GM10248 (cell line): ENCODE measurements at regions of chr2 and their contacts with region 1.

Region 1: DNA sequence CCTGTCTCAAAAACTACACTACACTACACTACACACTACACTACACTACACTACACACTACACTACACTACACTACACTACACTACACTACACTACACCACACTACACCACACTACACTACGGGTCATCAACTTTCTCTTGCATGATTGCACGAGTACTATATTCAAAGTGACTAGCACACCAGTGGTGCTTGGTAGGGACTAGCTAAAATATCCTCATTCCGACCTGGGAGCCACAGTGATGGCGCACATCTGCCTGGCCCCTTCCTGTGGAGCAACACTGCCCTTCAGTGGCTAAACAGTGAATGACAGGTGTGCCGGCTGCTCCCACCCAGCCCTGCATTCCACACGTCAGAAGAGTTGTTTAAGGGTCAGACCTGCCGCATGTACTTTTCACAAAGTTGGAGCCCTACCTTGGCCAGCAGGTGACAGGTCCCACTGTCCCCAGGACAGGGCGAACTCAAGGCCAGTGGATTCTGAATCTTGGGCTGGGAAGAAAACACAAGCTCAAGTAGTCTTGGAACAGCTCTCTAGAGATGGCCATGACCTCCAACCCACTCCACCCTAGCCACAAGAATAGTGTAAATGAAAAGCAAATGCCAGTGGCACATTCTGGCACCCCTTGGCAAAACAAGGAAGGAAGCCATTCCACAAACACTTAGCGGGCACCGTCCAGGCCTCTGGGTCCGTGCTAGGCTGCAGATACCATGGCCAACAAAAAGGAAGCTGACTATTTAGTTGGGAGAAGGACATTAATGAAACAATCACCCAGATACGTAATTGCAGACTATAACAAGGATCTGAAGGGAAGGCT is 79.7 kb upstream of the MSH2 start:
- DNase-seq: peak; percentile 82
- CTCF ChIP-seq: peak; percentile 99

Region 2: GRCh38 chr2:46923041-46923528 is 400.1 kb before region 1 on chr2:
- CTCF ChIA-PET with region 1: interaction called, 20 read pairs
- POLR2A ChIA-PET with region 1: no interaction called
- DNase-seq: no peak
- CTCF ChIP-seq: no peak

Region 3: DNA sequence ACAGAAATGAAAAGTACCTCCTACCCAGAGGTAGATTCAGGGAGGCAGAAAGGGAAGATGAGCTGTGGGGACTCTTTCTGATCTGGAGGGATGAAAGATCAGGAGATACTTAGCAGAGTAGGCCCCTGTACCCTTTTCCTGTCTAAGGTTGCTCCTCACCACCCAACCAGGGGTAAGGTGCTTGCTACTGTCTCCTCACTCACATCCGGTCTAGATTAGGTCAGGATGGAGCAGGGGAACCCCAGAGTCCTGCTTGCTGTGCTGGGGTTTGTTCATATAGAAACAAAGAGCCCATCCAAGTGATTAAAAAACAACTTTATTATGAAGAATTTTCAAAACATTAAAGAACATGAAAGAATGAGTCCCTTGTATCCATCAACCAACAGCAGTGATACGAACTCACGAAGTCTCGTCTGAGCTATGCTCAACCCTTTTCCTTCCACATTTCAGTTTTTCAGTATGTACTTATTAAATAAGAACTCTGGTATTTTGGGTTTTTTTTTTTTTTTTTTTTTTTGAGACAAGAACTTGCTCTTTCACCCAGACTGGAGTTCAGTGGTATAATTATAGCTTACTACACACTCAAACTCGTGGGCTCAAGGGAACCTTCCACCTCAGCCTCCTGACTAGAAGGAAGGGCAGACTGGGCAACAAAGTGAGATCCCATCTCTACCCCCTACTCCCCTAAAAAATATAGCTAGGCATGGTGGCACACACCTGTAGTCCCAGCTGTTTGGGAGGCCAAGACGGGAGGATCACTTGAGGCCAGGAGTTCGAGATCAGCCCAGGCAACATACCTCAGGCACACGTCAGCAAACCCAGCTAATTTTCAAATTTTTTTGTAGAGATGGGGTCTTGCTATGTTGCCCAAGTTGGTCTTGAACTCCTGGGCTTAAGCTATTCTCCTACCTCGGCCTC is 379.1 kb before region 1 on chr2:
- CTCF ChIA-PET with region 1: interaction called, 10 read pairs
- POLR2A ChIA-PET with region 1: no interaction called
- DNase-seq: peak; percentile 69
- CTCF ChIP-seq: no peak

Region 4: DNA sequence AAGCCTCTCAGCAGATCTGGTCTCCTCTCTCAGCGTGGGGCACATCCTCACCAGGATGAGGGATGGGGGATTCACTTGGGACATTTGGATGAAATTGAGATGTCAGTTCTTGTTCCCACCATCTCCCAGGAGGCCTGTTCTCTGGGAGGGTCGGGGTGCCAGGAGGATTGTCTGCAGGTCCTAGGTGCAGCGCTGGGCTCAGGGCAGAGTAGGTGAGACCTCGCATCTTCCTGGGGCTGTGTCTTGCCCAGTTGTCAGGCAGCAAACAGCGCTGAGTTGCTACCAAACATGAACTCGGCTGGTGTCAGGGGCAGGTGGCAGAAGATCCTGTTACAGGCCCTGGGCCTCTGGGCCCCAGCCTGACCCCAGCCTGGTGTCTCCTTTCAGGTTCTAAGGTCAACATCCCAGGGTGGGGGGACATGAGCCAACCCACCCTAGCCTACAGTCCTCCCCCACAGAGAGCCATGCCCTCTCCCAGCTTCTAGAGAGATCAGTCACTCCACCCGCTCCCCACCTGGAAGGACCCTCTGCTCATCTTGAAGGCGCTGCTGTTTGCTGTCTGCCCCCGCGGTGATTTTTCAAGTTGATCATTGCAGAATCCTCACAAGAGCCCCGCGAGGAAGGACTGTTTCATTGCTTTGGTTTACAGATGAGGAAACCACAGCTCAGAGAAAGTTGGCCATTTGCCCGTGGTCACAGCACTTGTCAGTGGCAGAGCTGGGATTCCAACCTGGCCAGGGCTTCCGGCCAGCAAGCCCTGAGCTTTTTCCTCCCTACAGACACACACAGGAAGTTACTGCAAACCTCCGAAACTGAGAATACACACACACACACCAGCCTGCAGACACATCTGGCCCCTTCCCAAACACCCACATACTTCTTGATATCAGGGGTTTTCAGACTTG is 252.0 kb before region 1 on chr2:
- CTCF ChIA-PET with region 1: interaction called, 12 read pairs
- POLR2A ChIA-PET with region 1: no interaction called
- DNase-seq: peak; percentile 71
- CTCF ChIP-seq: no peak

Region 5: GRCh38 chr2:47288864-47289263 is 34.4 kb before region 1 on chr2:
- CTCF ChIA-PET with region 1: interaction called, 10 read pairs
- POLR2A ChIA-PET with region 1: no interaction called
- DNase-seq: no peak
- CTCF ChIP-seq: no peak

Region 6: DNA sequence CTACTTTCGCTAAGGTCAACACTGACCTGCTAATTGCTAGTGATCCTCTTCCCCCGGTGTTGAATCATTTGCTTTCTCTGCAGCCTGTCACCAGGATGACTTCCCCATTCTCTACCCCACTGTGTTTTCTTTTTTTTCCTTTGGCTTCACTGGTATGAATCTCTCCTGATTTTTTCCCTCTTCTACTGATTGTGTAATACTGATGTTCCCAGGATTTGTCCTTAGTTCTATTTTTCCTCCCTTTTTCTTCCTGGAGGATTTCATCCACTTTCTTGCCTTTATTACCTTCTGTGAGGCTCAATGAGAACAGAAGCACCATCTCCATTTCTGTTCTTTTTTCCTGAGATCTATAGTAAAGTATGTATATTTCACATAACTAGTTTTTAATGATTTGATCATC is 65.7 kb after region 1 on chr2:
- CTCF ChIA-PET with region 1: interaction called, 11 read pairs
- POLR2A ChIA-PET with region 1: no interaction called
- DNase-seq: no peak
- CTCF ChIP-seq: no peak

Region 7: DNA sequence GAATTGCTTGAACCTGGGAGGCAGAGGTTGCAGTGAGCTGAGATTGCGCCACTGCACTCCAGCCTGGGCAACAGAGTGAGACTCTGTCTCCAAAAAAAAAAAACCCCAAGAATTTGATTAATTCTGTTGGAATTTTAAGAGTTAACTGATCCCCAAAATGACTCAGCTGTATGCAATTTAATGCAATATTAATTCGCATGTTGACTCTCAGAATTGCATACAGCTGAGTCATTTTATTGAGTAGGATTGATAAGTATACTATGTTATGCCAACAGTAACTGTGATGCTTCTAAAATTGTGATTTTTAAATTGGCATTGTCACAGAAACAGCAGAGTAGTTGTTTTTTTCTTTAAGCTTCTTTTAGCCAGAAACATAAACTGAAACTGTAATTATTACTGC is 99.3 kb after region 1 on chr2:
- CTCF ChIA-PET with region 1: no interaction called
- POLR2A ChIA-PET with region 1: no interaction called
- DNase-seq: no peak
- CTCF ChIP-seq: no peak